Heart right ventricle (tissue), 16 donors: ENCODE measurements at regions of chr15 and their contacts with region 1.

Region 1: GRCh38 chr15:81336568-81336967 is 12.6 kb upstream of the STARD5 start:
- DNase-seq: no peak
- ATAC-seq: no peak
- H3K4me3 ChIP-seq: no peak overlapping the region
- H3K27ac ChIP-seq: no peak overlapping the region
- H3K4me1 ChIP-seq: peaks cover 0 to 28% (median 9%) of the 10 kb centered on the region in 9 donors
- H3K27me3 ChIP-seq: no peaks in the 10 kb centered on the region
- CTCF ChIP-seq: peak in 7 of 9 donors; percentile 6 to 41 (median 31)

Region 2: GRCh38 chr15:81225161-81225671 is 111.4 kb before region 1 on chr15:
- intact Hi-C with region 1: no loop called
- DNase-seq: peak; percentile 55 to 58
- ATAC-seq: peak; percentile 58 to 77 (median 69)
- H3K4me3 ChIP-seq: no peak overlapping the region
- H3K27ac ChIP-seq: peak overlapping the region; percentile 19 to 88 (median 62)
- H3K4me1 ChIP-seq: peaks cover 2 to 48% (median 34%) of the 10 kb centered on the region in 9 donors
- H3K27me3 ChIP-seq: peaks cover 0 to 4% (median 0%) of the 10 kb centered on the region in 7 donors
- CTCF ChIP-seq: no peak

Region 3: DNA sequence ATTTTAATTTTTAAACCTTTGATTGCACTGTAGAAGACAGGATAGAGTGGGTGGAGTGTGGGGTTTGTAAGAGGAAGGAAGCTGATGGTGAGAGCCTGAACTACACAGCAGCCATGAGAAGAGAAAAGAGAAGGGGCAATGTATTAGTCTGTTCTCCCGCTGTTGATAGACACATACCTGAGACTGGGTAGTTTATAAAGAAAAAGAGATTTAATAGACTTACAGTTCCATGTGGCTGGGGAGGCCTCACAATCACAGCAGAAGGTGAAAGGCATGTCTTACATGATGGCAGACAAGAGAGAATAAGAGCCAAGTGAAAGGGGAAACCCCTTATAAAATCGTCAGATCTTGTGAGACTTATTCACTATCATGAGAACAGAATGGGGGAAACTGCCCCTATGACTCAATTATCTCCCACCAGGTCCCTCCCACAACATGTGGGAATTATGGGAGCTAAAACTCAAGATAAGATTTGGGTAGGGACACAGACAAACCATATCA is 49.9 kb before region 1 on chr15:
- intact Hi-C with region 1: loop called in 2 of 10 experiments (anchors 5 to 10 kb)
- DNase-seq: no peak
- ATAC-seq: peak in 1 of 8 donors; percentile 39
- H3K4me3 ChIP-seq: no peak overlapping the region
- H3K27ac ChIP-seq: peak overlapping the region in 1 of 10 donors; percentile 67
- H3K4me1 ChIP-seq: peaks cover 0 to 43% (median 4%) of the 10 kb centered on the region in 9 donors
- H3K27me3 ChIP-seq: no peaks in the 10 kb centered on the region
- CTCF ChIP-seq: no peak

Region 4: DNA sequence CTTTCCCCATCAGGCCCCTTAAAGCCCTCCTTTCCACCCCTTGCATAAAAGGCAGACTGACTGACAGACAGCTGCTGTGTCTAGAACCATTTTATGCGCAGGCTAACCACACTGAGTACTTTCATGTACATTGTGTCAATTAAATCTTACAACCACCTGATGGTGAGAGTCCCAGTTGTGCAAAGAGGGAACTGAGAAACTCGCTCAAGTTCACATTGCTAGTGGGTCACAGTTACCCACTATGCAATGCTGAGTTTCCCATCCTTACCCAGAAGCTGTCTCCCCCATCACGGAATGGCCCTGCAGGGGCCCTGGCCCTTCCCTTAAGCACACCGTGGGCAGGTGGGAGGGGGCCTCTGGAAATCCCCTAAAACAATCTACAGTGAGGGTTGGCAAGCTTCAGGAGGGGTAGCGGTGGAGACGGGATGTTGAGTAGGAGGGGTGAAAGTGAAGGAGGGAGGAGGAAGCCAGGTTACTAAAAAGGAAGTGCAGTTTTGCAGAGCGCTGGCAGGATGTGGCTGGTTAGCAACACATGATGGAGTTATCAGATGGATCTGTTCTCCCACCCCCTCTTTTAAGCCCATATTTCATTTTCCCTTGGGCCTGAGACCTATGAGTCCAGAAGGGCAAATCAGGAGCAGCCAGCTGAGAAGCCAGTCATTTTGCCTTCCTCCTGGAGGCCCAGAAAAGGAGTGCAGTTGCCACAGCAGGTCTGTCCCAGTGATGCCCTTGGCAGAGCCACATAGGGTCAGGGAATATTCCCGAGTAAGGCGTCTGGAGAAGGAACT is 42.6 kb before region 1 on chr15:
- intact Hi-C with region 1: loop called in 2 of 10 experiments (anchors 5 to 10 kb)
- DNase-seq: no peak
- ATAC-seq: peak in 4 of 8 donors; percentile 25 to 50 (median 38)
- H3K4me3 ChIP-seq: peak overlapping the region in 1 of 10 donors; percentile 34
- H3K27ac ChIP-seq: peak overlapping the region in 6 of 10 donors; percentile 19 to 92 (median 40)
- H3K4me1 ChIP-seq: peaks cover 6 to 76% (median 32%) of the 10 kb centered on the region in 9 donors
- H3K27me3 ChIP-seq: no peaks in the 10 kb centered on the region
- CTCF ChIP-seq: no peak

Region 5: DNA sequence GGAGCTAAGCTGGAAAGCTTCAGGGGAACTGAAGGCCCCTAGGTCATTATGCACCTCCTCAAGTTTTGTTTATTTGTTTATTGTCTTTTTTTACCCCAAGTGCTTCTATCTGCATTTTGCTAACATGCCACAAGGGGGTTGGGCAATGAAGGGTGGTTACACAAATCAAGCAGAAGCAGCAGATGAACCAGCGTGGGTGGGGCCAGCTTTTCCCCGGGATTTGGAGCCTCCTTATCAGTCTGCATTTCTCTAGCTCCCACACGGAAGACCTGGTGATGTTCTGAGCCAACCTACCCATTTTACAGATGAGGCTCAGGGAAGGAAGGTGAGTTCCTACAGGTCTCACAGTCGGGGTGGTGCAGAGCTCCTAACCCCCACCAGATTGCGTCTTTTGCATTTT is 20.7 kb after region 1 on chr15:
- intact Hi-C with region 1: no loop called
- DNase-seq: no peak
- ATAC-seq: no peak
- H3K4me3 ChIP-seq: no peak overlapping the region
- H3K27ac ChIP-seq: no peak overlapping the region
- H3K4me1 ChIP-seq: no peaks in the 10 kb centered on the region
- H3K27me3 ChIP-seq: peaks cover 0 to 5% (median 0%) of the 10 kb centered on the region in 7 donors
- CTCF ChIP-seq: no peak

Region 6: GRCh38 chr15:81375461-81375860 is 38.9 kb after region 1 on chr15:
- intact Hi-C with region 1: no loop called
- DNase-seq: peak in 1 of 2 donors; percentile 15
- ATAC-seq: no peak
- H3K4me3 ChIP-seq: no peak overlapping the region
- H3K27ac ChIP-seq: no peak overlapping the region
- H3K4me1 ChIP-seq: peaks cover 0 to 11% (median 0%) of the 10 kb centered on the region in 9 donors
- H3K27me3 ChIP-seq: peaks cover 0 to 4% (median 0%) of the 10 kb centered on the region in 7 donors
- CTCF ChIP-seq: no peak